Panc1 (cell line): ENCODE measurements at regions of chr11 and their contacts with region 1.

Region 1: DNA sequence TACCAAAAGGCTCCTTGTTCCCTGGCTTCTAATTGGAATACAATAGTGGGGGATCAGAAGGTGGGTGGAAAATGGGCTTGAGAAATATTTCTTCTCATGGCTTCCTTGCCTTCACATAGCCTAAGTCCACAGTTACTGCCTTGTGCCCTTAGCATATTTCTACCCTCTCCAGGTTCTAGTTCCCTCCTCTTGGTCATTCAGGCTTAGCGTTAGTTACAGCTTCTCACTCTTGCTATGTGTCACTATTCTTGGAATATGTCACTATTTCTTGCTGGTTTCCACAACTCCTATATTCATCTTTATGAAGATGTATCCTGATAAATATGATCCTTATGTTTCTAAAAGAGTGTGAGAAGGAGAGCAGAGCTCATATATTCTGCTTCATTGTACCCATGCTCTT is 2.5 kb downstream of the OR2D2 start:
- DNase-seq: no peak
- ATAC-seq: no peak
- H3K4me3 ChIP-seq: no peak overlapping the region
- H3K27ac ChIP-seq: no peak overlapping the region
- H3K4me1 ChIP-seq: no peaks in the 10 kb centered on the region
- H3K27me3 ChIP-seq: peaks cover 4% of the 10 kb centered on the region; the same call in 1 of the 2 replicates
- CTCF ChIP-seq: no peak

Region 2: GRCh38 chr11:7804226-7804625 is 914.4 kb after region 1 on chr11:
- CTCF ChIA-PET with region 1: interaction called, 12 read pairs
- POLR2A ChIA-PET with region 1: no interaction called
- in situ Hi-C with region 1: no loop called
- intact Hi-C with region 1: no loop called
- DNase-seq: no peak
- ATAC-seq: no peak
- H3K4me3 ChIP-seq: no peak overlapping the region
- H3K27ac ChIP-seq: no peak overlapping the region
- H3K4me1 ChIP-seq: no peaks in the 10 kb centered on the region
- H3K27me3 ChIP-seq: no peaks in the 10 kb centered on the region
- CTCF ChIP-seq: no peak